HEK293 (cell line): ENCODE measurements at regions of chr11 and their contacts with region 1.

Region 1: GRCh38 chr11:69950120-69950519 is 128.0 kb upstream of the ANO1 start:
- H3K4me3 ChIP-seq: no peak overlapping the region
- H3K27ac ChIP-seq: no peak overlapping the region
- H3K4me1 ChIP-seq: no peaks in the 10 kb centered on the region
- CTCF ChIP-seq: peak; percentile 45; the same call in 1 of the 2 replicates

Region 2: GRCh38 chr11:69928126-69928525 is 22.0 kb before region 1 on chr11:
- CTCF ChIA-PET with region 1: interaction called, 15 read pairs
- POLR2A ChIA-PET with region 1: no interaction called
- H3K4me3 ChIP-seq: no peak overlapping the region
- H3K27ac ChIP-seq: no peak overlapping the region
- H3K4me1 ChIP-seq: no peaks in the 10 kb centered on the region; the same call in 1 of the 2 replicates
- CTCF ChIP-seq: no peak

Region 3: GRCh38 chr11:70082829-70083228 is 132.7 kb after region 1 on chr11:
- CTCF ChIA-PET with region 1: interaction called, 14 read pairs
- POLR2A ChIA-PET with region 1: no interaction called
- H3K4me3 ChIP-seq: no peak overlapping the region
- H3K27ac ChIP-seq: no peak overlapping the region
- H3K4me1 ChIP-seq: no peaks in the 10 kb centered on the region
- CTCF ChIP-seq: no peak

Region 4: GRCh38 chr11:70247464-70248255 is 297.5 kb after region 1 on chr11:
- CTCF ChIA-PET with region 1: no interaction called
- POLR2A ChIA-PET with region 1: no interaction called
- H3K4me3 ChIP-seq: no peak overlapping the region
- H3K27ac ChIP-seq: no peak overlapping the region
- H3K4me1 ChIP-seq: no peaks in the 10 kb centered on the region
- CTCF ChIP-seq: no peak

Region 5: GRCh38 chr11:70358753-70359152 is 408.6 kb after region 1 on chr11:
- CTCF ChIA-PET with region 1: no interaction called
- POLR2A ChIA-PET with region 1: no interaction called
- H3K4me3 ChIP-seq: no peak overlapping the region
- H3K27ac ChIP-seq: no peak overlapping the region
- H3K4me1 ChIP-seq: no peaks in the 10 kb centered on the region
- CTCF ChIP-seq: no peak